ENCODE measurements at regions of chr3 and their contacts with region 1.

Region 1: DNA sequence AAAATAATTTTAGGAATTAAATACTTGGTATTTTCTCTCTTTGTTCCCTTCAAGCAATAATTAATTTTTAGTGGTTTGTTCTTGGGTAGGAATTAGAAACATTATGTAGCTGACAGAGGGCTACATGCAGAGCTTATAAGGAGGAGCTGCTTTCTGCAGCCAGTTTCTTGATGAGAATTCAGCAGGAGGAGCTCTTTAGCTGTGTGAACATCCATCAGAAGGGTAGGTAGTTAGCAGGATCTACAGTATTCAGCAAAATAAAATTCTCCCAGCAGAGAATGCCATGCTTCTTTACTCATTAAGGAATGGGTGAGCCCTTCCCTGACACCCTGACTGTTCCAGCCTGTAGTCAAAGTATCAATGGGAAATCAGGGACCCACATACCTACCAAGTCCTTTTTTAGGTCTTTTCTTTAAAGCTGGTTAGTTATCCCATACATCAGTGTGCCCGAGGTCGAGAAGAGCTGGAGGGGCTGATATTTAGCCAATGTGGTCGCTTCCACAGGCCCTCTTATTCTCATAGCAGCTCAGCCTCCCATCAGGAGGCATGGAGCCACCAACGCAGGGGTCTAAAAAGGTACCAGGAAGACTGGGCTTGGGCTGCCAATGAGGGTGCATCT is 54.0 kb downstream of the KCNAB1 start:
- DNase-seq: no peak
- H3K4me3 ChIP-seq: no peak overlapping the region
- H3K27me3 ChIP-seq: no peaks in the 10 kb centered on the region
- CTCF ChIP-seq: peak; percentile 46

Region 2: DNA sequence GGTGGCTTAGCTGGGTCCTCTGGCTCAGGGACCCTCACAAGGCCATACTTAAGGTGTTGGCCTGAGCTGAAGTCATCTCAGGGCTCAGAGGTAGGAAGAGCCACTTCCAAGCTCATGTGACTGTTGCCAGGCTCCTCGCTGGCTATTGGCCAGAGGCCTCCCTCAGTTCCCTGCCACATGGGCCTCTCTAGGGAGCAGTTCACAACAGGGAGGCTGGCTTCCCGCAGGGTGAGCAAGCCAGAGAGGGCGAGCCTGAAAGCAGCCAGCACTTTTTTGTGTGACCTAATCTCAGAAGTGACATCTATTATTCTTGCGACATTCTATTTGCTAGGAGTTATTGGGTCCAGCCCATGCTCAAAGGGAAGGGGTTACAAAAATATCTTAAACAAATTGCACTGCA is 179.2 kb after region 1 on chr3:
- CTCF ChIA-PET with region 1: no interaction called
- POLR2A ChIA-PET with region 1: no interaction called
- DNase-seq: no peak
- H3K4me3 ChIP-seq: no peak overlapping the region
- H3K27me3 ChIP-seq: 0 out of 2 replicates have a peak, but pooled peaks cover 1% of the 10 kb centered on the region
- CTCF ChIP-seq: no peak

Region 3: DNA sequence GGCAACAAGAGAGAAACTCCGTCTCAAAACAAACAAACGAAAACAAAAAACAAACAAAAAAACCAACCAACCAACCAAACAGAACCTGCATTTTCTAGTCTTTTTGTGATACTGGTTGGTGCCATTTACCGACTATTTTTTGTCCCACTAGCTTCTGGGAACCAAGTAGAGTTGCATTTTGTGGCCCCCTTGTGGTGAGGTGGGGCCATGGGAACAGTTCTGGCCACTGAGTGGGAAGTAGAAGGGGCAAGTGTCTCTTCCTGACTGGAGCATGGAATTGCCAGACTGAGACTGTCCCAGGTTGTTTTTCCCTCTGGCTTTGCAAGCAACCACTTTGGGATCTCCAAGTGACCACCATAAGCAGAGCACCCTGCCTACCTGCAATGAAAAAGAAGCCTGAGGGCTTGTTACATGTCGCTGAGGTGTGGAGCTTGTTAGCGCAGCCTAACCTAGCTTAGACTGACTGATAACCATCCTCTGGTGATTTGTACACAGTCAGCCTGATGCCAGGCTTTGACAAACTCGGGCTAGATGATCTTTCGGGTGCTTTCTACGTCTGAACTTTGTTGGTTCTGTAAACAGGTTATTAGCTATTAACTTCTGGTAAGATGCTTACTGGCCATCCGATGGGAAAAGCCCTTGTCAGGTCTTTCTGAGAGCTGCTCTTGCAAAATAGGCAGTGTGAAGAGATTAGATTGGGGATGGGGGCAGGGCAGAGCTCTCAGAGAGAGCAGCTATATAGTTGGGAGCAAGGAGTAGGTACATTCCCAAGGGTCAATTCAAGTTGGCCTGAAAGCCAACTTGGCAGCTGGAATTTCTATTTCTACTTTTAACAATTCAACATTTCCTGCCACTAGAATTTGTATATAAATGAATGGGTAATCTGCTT is 208.4 kb after region 1 on chr3:
- CTCF ChIA-PET with region 1: interaction called, 11 read pairs
- POLR2A ChIA-PET with region 1: no interaction called
- DNase-seq: no peak
- H3K4me3 ChIP-seq: no peak overlapping the region
- H3K27me3 ChIP-seq: no peaks in the 10 kb centered on the region; the same call in 1 of the 2 replicates
- CTCF ChIP-seq: peak; percentile 71

Region 4: GRCh38 chr3:156449712-156450574 is 275.6 kb after region 1 on chr3:
- CTCF ChIA-PET with region 1: interaction called, 41 read pairs
- POLR2A ChIA-PET with region 1: no interaction called
- DNase-seq: no peak
- H3K4me3 ChIP-seq: no peak overlapping the region
- H3K27me3 ChIP-seq: peaks cover 3% of the 10 kb centered on the region
- CTCF ChIP-seq: peak; percentile 61

Region 5: GRCh38 chr3:156509189-156510174 is 335.1 kb after region 1 on chr3:
- CTCF ChIA-PET with region 1: interaction called, 50 read pairs
- POLR2A ChIA-PET with region 1: no interaction called
- DNase-seq: no peak
- H3K4me3 ChIP-seq: no peak overlapping the region
- H3K27me3 ChIP-seq: peaks cover 3% of the 10 kb centered on the region
- CTCF ChIP-seq: peak; percentile 47